HCT116 (cell line): ENCODE measurements at regions of chr19 and their contacts with region 1.

Region 1: GRCh38 chr19:12140548-12141404 is 626 bp upstream of the ZNF20 start:
- DNase-seq: peak; percentile 52
- ATAC-seq: peak; percentile 85
- H3K4me3 ChIP-seq: peak overlapping the region; percentile 44 to 50
- H3K27ac ChIP-seq: no peak overlapping the region
- H3K4me1 ChIP-seq: no peaks in the 10 kb centered on the region
- H3K27me3 ChIP-seq: no peaks in the 10 kb centered on the region
- CTCF ChIP-seq: peak; percentile 68 to 71 (median 69); a peak in 5 of 6 replicates
- POLR2A ChIP-seq: no peak
- RAD21 ChIP-seq: peak; percentile 85

Region 2: GRCh38 chr19:11881151-11881800 is 259.5 kb before region 1 on chr19:
- CTCF ChIA-PET with region 1: no interaction called
- POLR2A ChIA-PET with region 1: no interaction called
- RAD21 ChIA-PET with region 1: no interaction called
- intact Hi-C with region 1: loop called (anchors 1 kb)
- DNase-seq: peak; percentile 23
- ATAC-seq: peak; percentile 70
- H3K4me3 ChIP-seq: no peak overlapping the region
- H3K27ac ChIP-seq: no peak overlapping the region
- H3K4me1 ChIP-seq: no peaks in the 10 kb centered on the region
- H3K27me3 ChIP-seq: no peaks in the 10 kb centered on the region
- CTCF ChIP-seq: peak; percentile 52 to 60 (median 58); a peak in 5 of 6 replicates
- POLR2A ChIP-seq: no peak
- RAD21 ChIP-seq: peak; percentile 76

Region 3: DNA sequence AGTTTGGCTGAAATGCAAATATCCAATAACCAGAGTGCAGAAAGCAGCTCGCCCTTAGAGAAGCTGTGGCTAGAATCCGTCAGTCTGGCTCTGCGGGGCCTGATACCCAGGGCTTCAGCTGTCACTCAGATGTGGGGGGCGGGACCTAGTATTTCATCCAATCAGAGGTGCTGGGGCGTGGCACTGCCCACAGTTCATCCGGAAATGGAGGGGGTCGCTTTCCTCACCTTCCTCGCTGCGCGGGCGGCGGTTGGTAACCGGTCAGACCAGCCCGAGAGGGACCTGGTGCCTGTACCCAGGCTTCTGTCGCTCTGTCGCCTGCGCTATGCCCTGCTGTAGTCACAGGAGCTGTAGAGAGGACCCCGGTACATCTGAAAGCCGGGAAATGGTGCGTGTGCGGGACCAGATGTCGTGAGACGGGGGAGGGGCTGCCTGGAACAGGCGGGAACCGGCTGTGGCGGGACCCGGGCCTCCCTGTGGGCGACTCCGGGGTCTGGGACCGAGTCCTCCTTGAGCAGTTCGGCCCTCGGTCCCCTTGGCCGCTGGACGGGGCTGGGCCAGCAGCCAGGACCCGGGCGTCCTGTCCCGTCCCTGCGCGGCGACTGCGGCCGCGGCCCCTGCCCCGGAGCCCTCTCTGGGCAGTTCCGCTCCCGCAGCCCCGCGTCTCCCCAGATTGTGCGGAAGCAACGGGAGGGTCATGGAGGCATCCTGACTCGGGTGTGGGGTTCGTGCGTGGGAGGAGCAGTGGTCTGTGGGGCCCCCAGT is 215.7 kb before region 1 on chr19 and contains the start of gene ZNF700:
- CTCF ChIA-PET with region 1: no interaction called
- POLR2A ChIA-PET with region 1: no interaction called
- RAD21 ChIA-PET with region 1: interaction called in 1 of 2 experiments, 4 read pairs
- intact Hi-C with region 1: loop called (anchors 1 kb)
- DNase-seq: peak; percentile 85
- ATAC-seq: peak; percentile 94
- H3K4me3 ChIP-seq: peak within 1 kb of the TSS; percentile 79 to 86
- H3K27ac ChIP-seq: peak within 1 kb of the TSS; percentile 94
- H3K4me1 ChIP-seq: peaks cover 0 to 22% of the 10 kb centered on the region in 2 experiments; a peak in 2 of 4 replicates
- H3K27me3 ChIP-seq: no peaks in the 10 kb centered on the region
- CTCF ChIP-seq: no peak
- POLR2A ChIP-seq: no peak
- RAD21 ChIP-seq: no peak
- total RNA-seq, gene ZNF700: 9.3 TPM

Region 4: GRCh38 chr19:11942843-11943108 is 198.0 kb before region 1 on chr19:
- CTCF ChIA-PET with region 1: no interaction called
- POLR2A ChIA-PET with region 1: no interaction called
- RAD21 ChIA-PET with region 1: no interaction called
- intact Hi-C with region 1: no loop called
- DNase-seq: no peak
- ATAC-seq: no peak
- H3K4me3 ChIP-seq: no peak overlapping the region
- H3K27ac ChIP-seq: no peak overlapping the region
- H3K4me1 ChIP-seq: no peaks in the 10 kb centered on the region
- H3K27me3 ChIP-seq: no peaks in the 10 kb centered on the region
- CTCF ChIP-seq: no peak
- POLR2A ChIP-seq: no peak
- RAD21 ChIP-seq: no peak

Region 5: DNA sequence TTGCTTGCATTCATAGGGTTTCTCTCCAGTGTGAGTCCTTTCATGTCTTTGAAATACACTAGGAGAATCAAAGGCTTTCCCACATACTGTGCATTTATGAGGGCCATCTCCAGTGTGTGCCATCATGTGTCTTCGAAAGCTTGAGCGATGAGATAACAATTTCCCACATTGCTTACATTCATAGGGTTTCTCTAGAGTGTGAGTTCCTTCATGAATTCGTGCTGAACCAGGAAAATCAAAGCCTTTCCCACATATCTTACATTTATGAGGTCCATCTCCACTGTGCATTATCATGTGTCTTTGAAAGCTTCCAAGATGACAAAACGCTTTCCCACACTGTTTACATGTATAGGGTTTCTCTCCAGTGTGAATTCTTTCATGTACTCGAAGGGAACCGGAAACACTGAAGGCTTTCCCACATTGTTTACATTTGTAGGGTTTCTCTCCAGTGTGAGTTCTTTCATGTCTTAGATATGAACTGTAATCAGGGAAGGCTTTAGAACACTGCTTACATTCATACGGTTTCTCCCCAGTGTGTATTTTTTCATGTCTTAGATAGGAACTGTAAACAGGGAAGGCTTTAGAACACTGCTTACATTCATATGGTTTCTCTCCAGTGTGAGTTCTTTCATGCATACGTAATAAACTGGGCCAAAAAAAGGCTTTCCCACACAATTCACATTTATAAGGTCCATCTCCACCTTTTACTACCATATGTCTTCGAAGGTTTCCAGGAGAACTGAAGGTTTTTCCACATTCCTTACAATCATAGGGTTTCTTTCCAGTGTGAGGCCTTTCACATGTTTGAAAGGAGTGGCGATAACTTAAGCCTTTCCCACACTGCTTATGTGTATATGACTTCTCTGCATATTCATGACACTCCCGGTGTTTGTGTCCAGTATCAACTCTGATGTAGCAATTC is 132.5 kb after region 1 on chr19:
- CTCF ChIA-PET with region 1: no interaction called
- POLR2A ChIA-PET with region 1: no interaction called
- RAD21 ChIA-PET with region 1: no interaction called
- intact Hi-C with region 1: no loop called
- DNase-seq: no peak
- ATAC-seq: no peak
- H3K4me3 ChIP-seq: no peak overlapping the region
- H3K27ac ChIP-seq: no peak overlapping the region
- H3K4me1 ChIP-seq: no peaks in the 10 kb centered on the region
- H3K27me3 ChIP-seq: no peaks in the 10 kb centered on the region
- CTCF ChIP-seq: no peak
- POLR2A ChIP-seq: no peak
- RAD21 ChIP-seq: no peak